ENCODE measurements at regions of chr15 and their contacts with region 1.

Region 1: GRCh38 chr15:56918046-56918938 is at the start of gene TCF12:
- DNase-seq: peak; percentile 86
- ATAC-seq: peak; percentile 90
- H3K4me3 ChIP-seq: peak within 1 kb of the TSS; percentile 84 to 87
- H3K27ac ChIP-seq: peak within 1 kb of the TSS; percentile 91
- H3K4me1 ChIP-seq: peaks cover 8 to 16% of the 10 kb centered on the region in 2 experiments; a peak in 3 of 4 replicates
- H3K27me3 ChIP-seq: no peaks in the 10 kb centered on the region
- CTCF ChIP-seq: peak; percentile 3 to 20 (median 20); a peak in 2 of 6 replicates
- POLR2A ChIP-seq: peak; percentile 51
- RAD21 ChIP-seq: peak; percentile 42
- total RNA-seq, gene TCF12: 71.6 TPM

Region 2: DNA sequence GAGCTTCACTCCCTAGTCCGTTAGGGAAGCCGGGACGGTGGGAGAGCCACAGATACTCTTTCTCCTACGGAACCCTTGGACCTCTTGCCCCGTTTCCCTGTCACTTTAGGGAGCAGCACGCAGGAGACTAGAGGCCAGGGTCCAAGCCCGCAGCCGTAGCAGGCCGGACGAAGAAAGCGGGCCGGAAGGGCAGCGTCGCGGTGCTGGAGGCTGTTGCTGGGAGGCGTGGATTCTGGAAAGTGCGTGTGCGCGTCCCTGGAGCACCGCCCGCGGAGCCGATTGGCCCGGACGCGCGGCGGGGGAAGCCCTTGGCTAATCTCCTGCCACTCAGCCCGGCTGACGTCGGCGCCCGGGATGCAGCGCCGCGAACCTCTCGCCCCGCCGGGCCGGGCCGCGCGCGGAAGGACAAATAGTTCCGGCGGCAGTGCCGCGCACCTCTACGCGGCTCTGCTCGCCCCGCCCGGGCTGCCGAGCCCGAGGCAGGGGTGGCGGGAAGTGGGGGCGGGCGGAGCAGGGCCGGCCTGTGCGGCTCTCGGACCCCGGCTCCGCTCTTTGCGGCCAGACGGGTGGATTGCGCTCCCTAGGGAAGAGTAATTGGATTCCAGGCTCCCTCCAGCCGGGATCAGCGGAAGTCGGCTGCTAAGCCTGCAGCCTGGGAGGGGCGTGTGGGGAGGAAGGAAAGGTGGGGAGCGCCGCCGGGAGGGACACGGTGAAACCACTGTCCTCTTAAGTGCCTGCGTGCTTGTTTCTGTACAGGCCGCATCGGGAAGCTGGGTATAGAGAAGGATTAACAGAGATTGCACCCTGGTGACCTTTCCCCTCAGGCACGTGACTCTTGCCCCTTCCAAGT is 31.1 kb before region 1 on chr15:
- CTCF ChIA-PET with region 1: no interaction called
- POLR2A ChIA-PET with region 1: interaction called, 9 read pairs
- RAD21 ChIA-PET with region 1: no interaction called
- intact Hi-C with region 1: loop called (anchors 1 kb)
- DNase-seq: peak; percentile 86
- ATAC-seq: peak; percentile 95
- H3K4me3 ChIP-seq: peak overlapping the region; percentile 59 to 69
- H3K27ac ChIP-seq: peak overlapping the region; percentile 92
- H3K4me1 ChIP-seq: peaks cover 16 to 17% of the 10 kb centered on the region in 2 experiments
- H3K27me3 ChIP-seq: no peaks in the 10 kb centered on the region
- CTCF ChIP-seq: no peak
- POLR2A ChIP-seq: peak; percentile 68
- RAD21 ChIP-seq: 0 out of 2 replicates have a peak, but pooled peaks have one; percentile 21

Measured in HCT116 (cell line).